CD14-positive monocyte (primary cell): ENCODE measurements at regions of chr7 and their contacts with region 1.

Region 1: DNA sequence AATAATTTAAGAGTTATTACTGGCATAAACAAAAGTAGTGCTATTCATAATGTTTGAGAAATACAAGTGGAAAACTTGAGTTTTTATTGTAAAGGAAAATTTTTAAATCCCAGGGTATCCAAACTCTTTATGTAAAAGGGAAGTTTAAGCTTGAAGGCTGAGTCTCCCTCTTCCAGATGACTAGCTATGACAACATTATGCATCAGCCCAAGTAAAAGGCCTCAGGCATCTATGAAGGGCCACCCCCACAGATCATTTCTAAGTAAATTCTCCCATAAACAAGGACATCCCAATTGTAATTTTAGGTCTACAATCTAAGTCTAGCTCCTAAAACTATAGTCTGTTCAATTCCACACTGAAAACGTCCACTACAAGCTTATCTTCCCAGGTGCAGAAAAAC is 166.2 kb upstream of the STEAP1 start:
- DNase-seq: no peak
- H3K4me3 ChIP-seq: no peak overlapping the region
- H3K4me3 Mint-ChIP-seq: no peak overlapping the region
- H3K27ac ChIP-seq: no peak overlapping the region
- H3K27ac Mint-ChIP-seq: no peak overlapping the region
- H3K4me1 ChIP-seq: no peaks in the 10 kb centered on the region
- H3K4me1 Mint-ChIP-seq: no peaks in the 10 kb centered on the region
- H3K27me3 ChIP-seq: no peaks in the 10 kb centered on the region
- H3K27me3 Mint-ChIP-seq: peaks cover 0 to 2% (median 1%) of the 10 kb centered on the region in 3 donors
- CTCF ChIP-seq: no peak

Region 2: GRCh38 chr7:89357121-89357520 is 631.0 kb before region 1 on chr7:
- intact Hi-C with region 1: loop called in 1 of 2 experiments (anchors 10 kb)
- DNase-seq: no peak
- H3K4me3 ChIP-seq: no peak overlapping the region
- H3K4me3 Mint-ChIP-seq: no peak overlapping the region
- H3K27ac ChIP-seq: no peak overlapping the region
- H3K27ac Mint-ChIP-seq: no peak overlapping the region
- H3K4me1 ChIP-seq: no peaks in the 10 kb centered on the region
- H3K4me1 Mint-ChIP-seq: no peaks in the 10 kb centered on the region
- H3K27me3 ChIP-seq: no peaks in the 10 kb centered on the region
- H3K27me3 Mint-ChIP-seq: no peaks in the 10 kb centered on the region
- CTCF ChIP-seq: no peak

Region 3: GRCh38 chr7:89826557-89826956 is 161.5 kb before region 1 on chr7:
- intact Hi-C with region 1: no loop called
- DNase-seq: no peak
- H3K4me3 ChIP-seq: no peak overlapping the region
- H3K4me3 Mint-ChIP-seq: no peak overlapping the region
- H3K27ac ChIP-seq: no peak overlapping the region
- H3K27ac Mint-ChIP-seq: no peak overlapping the region
- H3K4me1 ChIP-seq: no peaks in the 10 kb centered on the region
- H3K4me1 Mint-ChIP-seq: no peaks in the 10 kb centered on the region
- H3K27me3 ChIP-seq: no peaks in the 10 kb centered on the region
- H3K27me3 Mint-ChIP-seq: no peaks in the 10 kb centered on the region
- CTCF ChIP-seq: no peak